GM12878 (cell line): ENCODE measurements at regions of chr15 and their contacts with region 1.

Region 1: GRCh38 chr15:22253676-22254408 is 173.5 kb downstream of the OR4M2 start:
- DNase-seq: peak; percentile 9
- ATAC-seq: peak; percentile 80
- H3K4me3 ChIP-seq: no peak overlapping the region
- H3K27ac ChIP-seq: no peak overlapping the region
- H3K4me1 ChIP-seq: peaks cover 13% of the 10 kb centered on the region
- H3K27me3 ChIP-seq: no peaks in the 10 kb centered on the region
- CTCF ChIP-seq: no peak
- EP300 ChIP-seq: no peak
- POLR2A ChIP-seq: no peak
- RAD21 ChIP-seq: no peak

Region 2: DNA sequence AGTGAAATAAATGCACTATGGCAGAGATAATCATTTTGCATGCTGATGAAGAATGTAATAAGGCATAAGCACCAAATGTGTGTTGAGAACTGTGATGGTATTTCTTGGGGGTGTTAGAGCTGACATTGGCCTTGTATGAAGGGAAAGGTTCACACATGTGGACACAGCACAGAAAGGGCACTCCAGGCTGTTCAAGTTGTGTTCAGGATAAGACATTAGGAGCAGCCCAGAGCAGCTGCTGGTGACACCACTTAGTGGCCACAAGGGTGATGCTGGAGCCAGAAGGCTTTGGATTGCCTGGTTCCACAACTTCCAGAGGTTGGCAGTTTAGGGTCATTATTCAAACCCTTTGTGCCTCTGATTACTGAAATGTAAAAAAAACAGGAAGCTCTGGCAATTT is 1867.6 kb before region 1 on chr15:
- CTCF ChIA-PET with region 1: no interaction called
- POLR2A ChIA-PET with region 1: no interaction called
- RAD21 ChIA-PET with region 1: no interaction called
- SMC1A ChIA-PET with region 1: no interaction called
- in situ Hi-C with region 1: loop called (anchors 10 kb)
- intact Hi-C with region 1: no loop called
- DNase-seq: no peak
- ATAC-seq: no peak
- H3K4me3 ChIP-seq: no peak overlapping the region
- H3K27ac ChIP-seq: no peak overlapping the region
- H3K4me1 ChIP-seq: no peaks in the 10 kb centered on the region
- H3K27me3 ChIP-seq: no peaks in the 10 kb centered on the region
- CTCF ChIP-seq: no peak
- EP300 ChIP-seq: no peak
- POLR2A ChIP-seq: no peak
- RAD21 ChIP-seq: no peak